Mammary epithelial cell (primary cell): ENCODE measurements at regions of chr17 and their contacts with region 1.

Region 1: DNA sequence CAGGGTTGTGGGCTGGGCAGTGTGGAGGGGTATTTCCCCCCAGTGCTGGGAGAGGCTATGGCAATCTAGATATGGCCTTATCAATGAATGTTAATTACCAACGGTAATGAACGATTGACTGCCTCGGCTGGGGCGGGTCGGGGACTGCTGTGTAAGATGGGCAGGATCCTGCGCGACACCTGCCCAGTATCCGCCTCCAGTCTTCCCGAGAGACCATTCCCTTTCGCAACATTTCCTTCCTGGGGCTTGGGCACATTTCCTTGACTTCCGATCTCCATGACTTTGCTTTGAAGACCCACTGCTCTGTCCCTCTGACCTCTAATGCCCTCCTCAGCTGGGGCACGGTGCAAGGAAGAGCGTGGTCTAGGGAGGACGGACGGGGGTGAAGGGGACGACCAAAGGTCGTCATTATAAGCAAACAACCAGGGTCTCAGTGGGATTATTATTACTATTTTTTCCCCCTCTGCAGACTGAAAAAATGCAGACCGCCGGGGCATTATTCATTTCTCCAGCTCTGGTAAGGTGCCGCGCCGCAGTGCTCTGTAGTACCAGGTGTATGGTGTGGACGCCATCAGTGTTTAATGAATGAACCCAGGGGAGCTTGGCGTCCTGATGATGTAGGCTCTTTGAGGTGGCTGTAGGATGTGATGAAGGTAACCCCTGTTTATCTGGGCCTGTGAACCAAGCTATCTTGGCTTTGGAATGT is 506 bp downstream of the ATP5MC1 start:
- DNase-seq: no peak
- H3K4me3 ChIP-seq: peak overlapping the region; percentile 69 to 93 (median 85)
- H3K27ac ChIP-seq: peak overlapping the region; percentile 85
- H3K4me1 ChIP-seq: peaks cover 12% of the 10 kb centered on the region
- H3K27me3 ChIP-seq: no peaks in the 10 kb centered on the region
- CTCF ChIP-seq: no peak

Region 2: GRCh38 chr17:48908047-48908843 is 15.2 kb after region 1 on chr17 and contains the start of gene UBE2Z:
- CTCF ChIA-PET with region 1: no interaction called
- dilution Hi-C with region 1: no loop called
- in situ Hi-C with region 1: no loop called
- intact Hi-C with region 1: loop called (anchors 1 kb)
- DNase-seq: peak; percentile 95
- H3K4me3 ChIP-seq: peak within 1 kb of the TSS; percentile 66 to 89 (median 84)
- H3K27ac ChIP-seq: peak within 1 kb of the TSS; percentile 96
- H3K4me1 ChIP-seq: peaks cover 21% of the 10 kb centered on the region
- H3K27me3 ChIP-seq: no peaks in the 10 kb centered on the region
- CTCF ChIP-seq: peak in 1 of 2 donors; percentile 26
- total RNA-seq, gene UBE2Z: 104 to 132 TPM

Region 3: DNA sequence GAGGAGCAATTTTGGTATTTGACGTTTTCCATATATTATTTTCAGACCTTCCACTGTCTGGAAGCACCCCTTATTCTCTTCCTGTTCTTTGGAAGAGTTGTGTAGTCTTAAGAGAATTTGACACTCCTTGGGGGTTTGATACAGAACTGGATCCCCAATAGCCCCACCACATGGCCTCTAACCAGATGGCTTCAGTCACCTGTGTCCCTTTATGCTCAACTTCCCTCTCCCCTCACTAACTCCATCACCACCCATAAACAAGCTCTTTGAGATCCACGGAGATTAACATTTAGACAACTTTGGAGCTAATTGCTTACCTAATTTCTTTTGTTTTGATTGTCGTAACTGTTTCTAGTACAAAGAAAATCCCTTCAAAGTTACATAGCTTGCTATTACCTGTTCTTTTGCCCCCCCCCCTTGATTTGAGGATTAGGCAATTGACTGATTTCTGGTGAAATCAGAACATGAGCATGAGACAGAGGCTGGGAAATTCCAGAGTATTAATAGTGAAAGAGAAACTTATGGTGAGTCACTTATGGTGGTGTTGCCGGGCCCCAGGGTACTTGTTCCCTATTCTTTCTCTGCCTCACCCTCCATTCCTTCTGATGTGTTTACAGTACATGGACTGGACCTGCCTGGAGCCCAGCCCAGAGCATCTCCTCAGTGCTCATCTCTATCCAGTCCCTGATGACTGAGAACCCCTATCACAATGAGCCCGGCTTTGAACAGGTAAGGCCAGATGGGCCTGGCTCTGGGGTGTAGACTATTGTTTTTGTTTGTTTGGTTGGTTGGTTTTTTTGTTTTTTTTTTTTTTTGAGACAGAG is 22.6 kb after region 1 on chr17:
- CTCF ChIA-PET with region 1: no interaction called
- dilution Hi-C with region 1: no loop called
- in situ Hi-C with region 1: no loop called
- intact Hi-C with region 1: loop called (anchors 1 kb)
- DNase-seq: peak; percentile 96
- H3K4me3 ChIP-seq: no peak overlapping the region
- H3K27ac ChIP-seq: peak overlapping the region; percentile 96
- H3K4me1 ChIP-seq: peaks cover 27% of the 10 kb centered on the region
- H3K27me3 ChIP-seq: no peaks in the 10 kb centered on the region
- CTCF ChIP-seq: no peak